ENCODE measurements at regions of chr17 and their contacts with region 1.

Region 1: DNA sequence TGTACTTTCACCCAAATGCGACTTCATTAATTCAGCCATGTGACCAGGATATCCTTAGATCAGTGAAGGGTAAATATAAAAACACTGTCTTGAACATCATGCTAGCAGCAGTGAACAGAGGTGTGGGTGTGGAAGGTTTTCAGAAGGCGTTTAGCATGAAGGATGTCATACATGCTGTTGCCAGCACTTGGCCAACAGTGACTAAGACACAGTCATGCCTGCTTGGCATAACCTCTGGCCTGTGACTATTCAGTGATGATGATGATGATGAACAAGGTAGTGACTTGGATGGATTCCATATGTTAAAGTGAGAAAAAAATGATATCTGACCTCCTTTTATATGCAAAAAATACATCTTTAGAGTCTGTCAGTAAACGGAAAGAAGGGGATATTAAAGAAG is 97.9 kb downstream of the MAP2K4 start:
- DNase-seq: no peak
- ATAC-seq: no peak
- H3K4me3 ChIP-seq: no peak overlapping the region
- H3K4me3 Mint-ChIP-seq: no peak overlapping the region
- H3K27ac ChIP-seq: no peak overlapping the region
- H3K27ac Mint-ChIP-seq: no peak overlapping the region
- H3K4me1 ChIP-seq: no peaks in the 10 kb centered on the region
- H3K4me1 Mint-ChIP-seq: no peaks in the 10 kb centered on the region
- H3K27me3 ChIP-seq: no peaks in the 10 kb centered on the region
- H3K27me3 Mint-ChIP-seq: no peaks in the 10 kb centered on the region
- CTCF ChIP-seq: no peak

Region 2: DNA sequence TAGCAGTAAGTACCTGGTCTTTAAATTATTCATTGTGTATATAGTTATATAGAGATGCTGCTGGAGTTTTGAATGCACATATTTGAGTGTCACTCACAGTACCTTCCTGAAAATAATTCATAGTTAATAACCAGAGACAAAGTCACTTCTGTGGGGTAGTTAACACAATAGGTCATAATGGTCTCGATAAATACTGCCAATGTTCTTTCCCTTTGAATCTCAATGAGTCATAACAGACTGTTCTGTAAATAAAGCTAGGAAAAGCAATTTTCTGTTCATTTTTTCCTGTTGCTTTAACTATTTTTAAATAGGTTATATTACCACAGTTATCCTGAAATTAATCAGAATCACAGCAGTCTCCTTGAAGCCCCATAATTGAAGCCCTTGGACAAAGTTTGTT is 10.7 kb before region 1 on chr17:
- CTCF ChIA-PET with region 1: no interaction called
- POLR2A ChIA-PET with region 1: no interaction called
- intact Hi-C with region 1: loop called in 1 of 2 experiments (anchors 1 kb)
- DNase-seq: no peak
- ATAC-seq: no peak
- H3K4me3 ChIP-seq: no peak overlapping the region
- H3K4me3 Mint-ChIP-seq: no peak overlapping the region
- H3K27ac ChIP-seq: no peak overlapping the region
- H3K27ac Mint-ChIP-seq: no peak overlapping the region
- H3K4me1 ChIP-seq: no peaks in the 10 kb centered on the region
- H3K4me1 Mint-ChIP-seq: peaks cover 10% of the 10 kb centered on the region
- H3K27me3 ChIP-seq: no peaks in the 10 kb centered on the region
- H3K27me3 Mint-ChIP-seq: no peaks in the 10 kb centered on the region
- CTCF ChIP-seq: no peak

Measured in CD8-positive, alpha-beta T cell (primary cell).